Natural killer cell (primary cell): ENCODE measurements at regions of chr18 and their contacts with region 1.

Region 1: GRCh38 chr18:48675352-48675761 is 136.5 kb downstream of the CTIF start:
- DNase-seq: peak; percentile 84 to 91
- ATAC-seq: peak; percentile 97 to 99 (median 99)
- H3K4me3 ChIP-seq: no peak overlapping the region
- H3K4me3 Mint-ChIP-seq: no peak overlapping the region
- H3K27ac ChIP-seq: no peak overlapping the region
- H3K27ac Mint-ChIP-seq: no peak overlapping the region
- H3K4me1 ChIP-seq: peaks cover 7% of the 10 kb centered on the region
- H3K4me1 Mint-ChIP-seq: no peaks in the 10 kb centered on the region
- H3K27me3 ChIP-seq: no peaks in the 10 kb centered on the region
- H3K27me3 Mint-ChIP-seq: no peaks in the 10 kb centered on the region
- CTCF ChIP-seq: peak; percentile 93

Region 2: DNA sequence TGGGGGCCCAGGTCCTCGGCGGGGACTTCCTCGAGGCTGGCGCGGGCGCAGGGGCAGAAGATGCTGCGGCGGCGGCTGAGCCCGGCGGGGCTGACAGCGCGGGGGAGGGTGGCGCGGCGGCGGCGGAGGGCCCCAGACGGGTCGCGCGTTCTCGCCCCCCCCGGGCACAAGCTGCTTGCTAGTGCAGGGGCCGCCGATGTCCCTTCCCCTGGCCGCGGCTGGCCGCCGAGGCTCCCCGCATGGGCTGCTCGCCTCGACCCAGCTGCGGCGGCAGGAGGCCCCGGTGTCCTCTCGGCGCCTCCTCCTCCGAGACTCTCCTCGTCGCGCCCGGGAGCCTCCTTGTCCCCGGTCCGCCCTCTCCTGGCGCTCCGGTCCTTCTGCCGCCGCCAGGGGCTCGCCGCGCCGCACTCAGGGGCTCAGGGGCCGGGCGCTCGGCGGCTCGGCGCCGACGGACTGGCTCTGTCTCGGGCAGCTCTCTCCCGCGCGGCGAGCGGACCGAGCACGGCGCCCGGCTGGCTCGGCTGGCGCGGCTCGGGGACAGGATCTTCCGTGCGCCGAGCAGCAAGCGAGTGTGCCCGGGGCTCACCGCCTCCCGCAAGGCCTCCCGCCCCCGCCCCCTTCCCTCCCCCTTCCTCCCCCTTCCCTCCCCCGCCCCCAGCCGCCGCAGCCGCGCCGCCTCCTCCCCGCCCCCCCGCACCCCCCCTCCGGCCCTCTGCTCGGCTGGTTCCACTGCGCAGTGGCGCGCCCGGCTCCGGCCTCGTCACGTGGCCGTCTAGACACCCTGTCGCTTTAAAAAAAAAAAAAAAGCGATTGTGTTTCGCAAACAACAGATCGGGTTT is 276.3 kb after region 1 on chr18:
- intact Hi-C with region 1: loop called (anchors 10 kb)
- DNase-seq: peak; percentile 75 to 91
- ATAC-seq: peak; percentile 45 to 78 (median 59)
- H3K4me3 ChIP-seq: peak overlapping the region; percentile 85
- H3K4me3 Mint-ChIP-seq: peak overlapping the region; percentile 100
- H3K27ac ChIP-seq: peak overlapping the region; percentile 97
- H3K27ac Mint-ChIP-seq: peak overlapping the region; percentile 95 to 99
- H3K4me1 ChIP-seq: peaks cover 30% of the 10 kb centered on the region
- H3K4me1 Mint-ChIP-seq: peaks cover 39 to 45% of the 10 kb centered on the region in 2 donors
- H3K27me3 ChIP-seq: no peaks in the 10 kb centered on the region
- H3K27me3 Mint-ChIP-seq: no peaks in the 10 kb centered on the region
- CTCF ChIP-seq: no peak

Region 3: DNA sequence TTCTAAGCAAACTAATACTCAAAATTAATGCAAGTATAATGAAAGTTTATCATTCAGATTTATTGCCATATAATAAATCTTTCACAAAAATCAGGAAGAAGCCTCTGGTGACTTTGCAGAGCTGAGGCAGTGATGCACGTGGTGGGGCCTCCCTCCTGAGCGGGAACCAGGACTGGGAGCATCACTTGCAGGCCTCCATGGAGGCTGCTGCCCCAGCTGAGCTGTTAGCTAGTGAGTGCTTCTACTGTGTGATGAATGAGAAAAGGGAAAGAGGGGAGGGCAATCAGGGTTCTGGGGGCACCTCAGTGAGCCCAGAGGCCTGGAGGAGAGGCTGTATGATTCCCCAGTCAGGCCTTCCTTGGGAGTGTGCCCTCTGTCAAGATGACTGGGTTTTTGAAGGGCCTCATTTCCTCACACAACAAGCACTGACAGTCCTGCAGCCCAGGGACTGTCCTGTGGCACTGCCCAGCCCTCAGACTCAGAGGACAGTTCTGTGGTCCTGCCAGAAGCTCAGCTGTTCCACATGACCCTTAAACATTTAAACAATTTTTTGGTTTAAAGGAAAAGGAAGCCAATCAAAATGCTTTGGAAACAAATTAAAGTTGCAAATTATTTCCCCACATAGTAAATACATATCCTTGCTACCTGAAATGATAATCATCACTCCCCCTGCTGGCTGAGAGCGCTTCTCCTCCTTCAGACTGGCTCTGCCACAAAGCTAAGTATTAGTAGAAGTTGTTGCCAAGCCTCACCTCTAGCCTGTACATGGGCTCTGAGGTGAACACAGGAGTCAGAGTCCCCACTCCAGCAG is 366.3 kb after region 1 on chr18:
- intact Hi-C with region 1: loop called (anchors 1 kb)
- DNase-seq: peak in 1 of 2 donors; percentile 71
- ATAC-seq: peak; percentile 8 to 65 (median 63)
- H3K4me3 ChIP-seq: no peak overlapping the region
- H3K4me3 Mint-ChIP-seq: no peak overlapping the region
- H3K27ac ChIP-seq: no peak overlapping the region
- H3K27ac Mint-ChIP-seq: no peak overlapping the region
- H3K4me1 ChIP-seq: peaks cover 10% of the 10 kb centered on the region
- H3K4me1 Mint-ChIP-seq: peaks cover 4 to 22% of the 10 kb centered on the region in 2 donors
- H3K27me3 ChIP-seq: no peaks in the 10 kb centered on the region
- H3K27me3 Mint-ChIP-seq: no peaks in the 10 kb centered on the region
- CTCF ChIP-seq: peak; percentile 40

Region 4: DNA sequence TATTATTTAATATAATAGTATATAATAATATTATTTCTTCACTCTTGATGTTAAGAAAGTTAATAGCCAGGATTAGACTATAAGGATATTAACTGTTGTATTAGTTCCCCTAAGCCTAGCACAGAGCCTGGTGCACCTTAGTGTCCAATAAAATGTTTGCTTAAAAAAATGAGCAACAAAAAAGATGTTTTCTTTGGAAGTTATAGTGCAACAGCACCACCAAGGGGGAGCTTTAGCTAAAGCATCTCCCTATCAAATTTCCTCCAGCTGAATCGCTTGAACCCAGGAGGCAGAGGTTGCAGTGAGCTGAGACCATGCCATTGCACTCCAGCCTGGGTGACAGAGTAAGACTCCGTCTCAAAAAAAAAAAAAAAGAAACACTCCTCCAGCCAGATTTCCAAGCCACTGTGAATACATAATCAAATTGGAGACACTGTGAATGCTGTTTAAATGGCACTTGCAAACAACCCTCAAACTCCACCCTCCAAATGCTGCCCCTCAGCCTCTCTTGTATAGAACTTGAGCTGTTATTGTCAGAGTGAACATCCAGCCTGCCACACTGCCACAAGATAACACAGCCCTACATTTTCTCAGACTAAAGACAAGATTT is 563.2 kb after region 1 on chr18:
- intact Hi-C with region 1: loop called (anchors 1 kb)
- DNase-seq: peak in 1 of 2 donors; percentile 39
- ATAC-seq: peak in 1 of 3 donors; percentile 47
- H3K4me3 ChIP-seq: no peak overlapping the region
- H3K4me3 Mint-ChIP-seq: no peak overlapping the region
- H3K27ac ChIP-seq: no peak overlapping the region
- H3K27ac Mint-ChIP-seq: no peak overlapping the region
- H3K4me1 ChIP-seq: no peaks in the 10 kb centered on the region
- H3K4me1 Mint-ChIP-seq: peaks cover 4 to 9% of the 10 kb centered on the region in 2 donors
- H3K27me3 ChIP-seq: no peaks in the 10 kb centered on the region
- H3K27me3 Mint-ChIP-seq: no peaks in the 10 kb centered on the region
- CTCF ChIP-seq: peak; percentile 34

Region 5: DNA sequence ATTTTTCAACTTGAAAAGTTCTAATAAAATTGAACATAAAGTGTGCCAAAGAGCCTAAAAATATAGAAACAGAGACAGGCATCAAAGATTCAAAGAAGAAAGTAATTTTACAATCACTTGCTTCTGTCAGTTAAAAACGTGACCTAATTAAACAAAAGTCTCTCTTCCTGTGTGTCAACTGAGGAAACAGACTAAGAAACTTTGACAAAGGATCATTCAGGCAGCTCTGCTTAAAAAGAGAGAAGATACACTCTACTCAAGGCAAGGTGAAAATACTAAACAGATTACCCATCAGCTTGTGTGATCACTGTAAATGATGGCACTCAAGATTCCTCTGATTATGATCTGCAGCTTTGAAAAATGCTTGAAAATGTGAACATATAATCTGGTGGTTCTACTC is 737.3 kb after region 1 on chr18:
- intact Hi-C with region 1: loop called (anchors 1 kb)
- DNase-seq: peak in 1 of 2 donors; percentile 14
- ATAC-seq: peak in 1 of 3 donors; percentile 43
- H3K4me3 ChIP-seq: no peak overlapping the region
- H3K4me3 Mint-ChIP-seq: no peak overlapping the region
- H3K27ac ChIP-seq: peak overlapping the region; percentile 14
- H3K27ac Mint-ChIP-seq: peak overlapping the region; percentile 77 to 82
- H3K4me1 ChIP-seq: no peaks in the 10 kb centered on the region
- H3K4me1 Mint-ChIP-seq: peaks cover 20 to 24% of the 10 kb centered on the region in 2 donors
- H3K27me3 ChIP-seq: no peaks in the 10 kb centered on the region
- H3K27me3 Mint-ChIP-seq: no peaks in the 10 kb centered on the region
- CTCF ChIP-seq: no peak

Region 6: DNA sequence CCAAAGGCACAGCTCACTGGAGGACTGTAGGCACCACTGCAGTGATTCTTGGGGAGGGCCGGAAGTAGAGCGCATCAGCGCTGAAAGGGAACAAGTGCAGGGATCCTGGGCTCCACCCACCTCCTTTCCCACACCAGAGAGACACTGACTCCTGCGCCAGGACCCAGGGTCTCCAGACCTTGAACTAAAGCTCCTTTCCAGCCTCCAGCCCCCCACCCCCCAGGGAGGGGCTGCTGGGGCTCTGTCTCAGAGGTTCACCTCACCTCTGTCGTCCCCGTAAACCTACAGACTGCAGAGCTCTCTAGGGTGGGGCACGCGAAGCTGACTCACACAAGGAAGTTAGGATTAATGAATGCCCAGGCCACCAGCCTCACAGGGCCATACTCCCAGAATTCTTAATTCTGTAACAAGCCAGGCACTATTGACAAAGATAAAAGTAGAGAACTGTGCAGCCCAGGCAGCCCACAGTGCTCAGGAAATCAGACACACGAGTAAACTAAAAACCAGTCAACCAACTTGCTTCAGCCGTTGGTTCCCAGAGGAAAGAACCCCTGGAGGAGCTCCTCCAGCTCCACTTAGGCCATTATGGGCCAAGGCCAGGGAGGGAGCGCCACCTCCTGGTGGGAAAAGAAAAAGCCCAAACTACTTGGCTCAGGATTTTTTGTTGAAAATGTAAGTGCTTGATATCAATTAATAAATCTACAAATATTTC is 1183.1 kb after region 1 on chr18:
- intact Hi-C with region 1: loop called (anchors 1 kb)
- DNase-seq: peak; percentile 54 to 78
- ATAC-seq: peak in 2 of 3 donors; percentile 63 to 67
- H3K4me3 ChIP-seq: no peak overlapping the region
- H3K4me3 Mint-ChIP-seq: no peak overlapping the region
- H3K27ac ChIP-seq: no peak overlapping the region
- H3K27ac Mint-ChIP-seq: no peak overlapping the region
- H3K4me1 ChIP-seq: peaks cover 6% of the 10 kb centered on the region
- H3K4me1 Mint-ChIP-seq: peaks cover 9 to 12% of the 10 kb centered on the region in 2 donors
- H3K27me3 ChIP-seq: no peaks in the 10 kb centered on the region
- H3K27me3 Mint-ChIP-seq: no peaks in the 10 kb centered on the region
- CTCF ChIP-seq: peak; percentile 94